ENCODE measurements at regions of chr7 and their contacts with region 1.

Region 1: DNA sequence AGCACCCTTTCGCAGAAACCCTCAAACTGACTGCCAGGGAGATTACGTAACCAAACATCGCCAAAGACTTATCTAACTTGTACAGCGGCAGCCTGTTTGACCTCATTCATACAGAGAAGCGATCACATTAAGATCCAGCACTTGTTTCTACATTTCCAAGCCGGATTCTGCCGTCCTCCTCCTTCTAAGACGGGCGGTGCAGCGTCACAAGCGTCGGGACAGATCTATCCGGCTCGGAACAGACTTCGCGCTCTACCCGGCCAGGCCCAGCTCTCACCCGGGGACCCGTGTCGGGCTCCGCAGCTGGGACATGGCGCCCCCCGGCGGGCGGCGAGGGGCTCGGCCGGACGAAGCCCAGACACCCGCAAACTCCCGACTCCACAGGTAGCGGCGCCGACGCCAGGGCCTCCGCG is 373 bp downstream of the H2AZ2 start:
- DNase-seq: peak; percentile 90 to 96 (median 94)
- H3K4me3 ChIP-seq: peak overlapping the region; percentile 72 to 98 (median 87)
- H3K27ac ChIP-seq: peak overlapping the region; percentile 93 to 97
- H3K4me1 ChIP-seq: peaks cover 7 to 40% (median 25%) of the 10 kb centered on the region in 4 experiments
- H3K27me3 ChIP-seq: no peaks in the 10 kb centered on the region

Region 2: GRCh38 chr7:44415047-44415446 is 432.5 kb before region 1 on chr7:
- CTCF ChIA-PET with region 1: no interaction called
- POLR2A ChIA-PET with region 1: no interaction called
- DNase-seq: no peak
- H3K4me3 ChIP-seq: no peak overlapping the region
- H3K27ac ChIP-seq: no peak overlapping the region
- H3K4me1 ChIP-seq: no peaks in the 10 kb centered on the region
- H3K27me3 ChIP-seq: no peaks in the 10 kb centered on the region

Region 3: DNA sequence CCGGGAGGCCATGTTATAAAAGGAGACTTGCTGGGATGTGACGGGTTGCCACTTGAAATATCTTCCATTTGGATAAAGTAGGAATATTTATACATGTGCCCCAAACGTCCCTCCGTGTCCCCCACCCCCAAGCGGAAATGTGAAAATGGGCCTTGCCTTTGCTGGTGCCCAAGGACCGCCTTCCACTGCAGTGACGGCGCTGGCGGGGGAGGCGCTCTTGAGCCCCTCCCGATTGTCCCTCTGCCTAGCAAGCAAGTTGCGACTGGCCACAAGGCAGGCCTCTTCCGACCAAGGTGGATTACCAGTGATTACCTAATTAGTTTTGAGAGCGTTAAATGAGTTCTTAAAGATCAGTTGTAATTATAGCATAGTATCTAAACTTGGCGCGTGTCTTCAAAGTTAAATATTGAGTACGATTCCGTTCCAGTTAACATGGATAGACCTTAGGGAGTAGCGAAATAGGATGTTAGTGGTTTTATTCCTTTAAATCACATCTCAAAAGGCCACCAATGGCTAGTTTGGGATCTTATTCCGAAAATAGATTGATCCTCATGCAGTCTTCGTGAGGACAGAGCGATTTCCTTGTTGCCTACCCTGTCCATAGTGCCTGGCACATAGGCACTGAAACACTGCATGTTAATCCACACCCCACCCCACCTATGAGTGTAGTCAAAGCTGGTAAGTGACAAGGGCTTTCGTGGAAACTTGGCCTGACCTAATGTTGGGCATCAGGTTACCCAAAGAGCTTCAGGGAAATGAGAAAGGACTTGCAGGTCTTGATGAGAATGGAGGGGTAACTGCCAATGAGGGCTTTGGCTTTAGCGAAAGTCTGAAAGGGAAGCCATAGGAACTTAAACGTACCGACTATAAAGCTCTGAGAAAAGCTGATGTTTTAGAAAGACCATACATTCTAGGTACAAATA is 49.9 kb before region 1 on chr7:
- CTCF ChIA-PET with region 1: interaction called, 6 read pairs
- POLR2A ChIA-PET with region 1: interaction called, 16 read pairs
- DNase-seq: peak; percentile 90 to 94 (median 92)
- H3K4me3 ChIP-seq: peak overlapping the region; percentile 84 to 98 (median 94)
- H3K27ac ChIP-seq: peak overlapping the region; percentile 97 to 99
- H3K4me1 ChIP-seq: peaks cover 10 to 25% (median 22%) of the 10 kb centered on the region in 4 experiments
- H3K27me3 ChIP-seq: no peaks in the 10 kb centered on the region

Region 4: DNA sequence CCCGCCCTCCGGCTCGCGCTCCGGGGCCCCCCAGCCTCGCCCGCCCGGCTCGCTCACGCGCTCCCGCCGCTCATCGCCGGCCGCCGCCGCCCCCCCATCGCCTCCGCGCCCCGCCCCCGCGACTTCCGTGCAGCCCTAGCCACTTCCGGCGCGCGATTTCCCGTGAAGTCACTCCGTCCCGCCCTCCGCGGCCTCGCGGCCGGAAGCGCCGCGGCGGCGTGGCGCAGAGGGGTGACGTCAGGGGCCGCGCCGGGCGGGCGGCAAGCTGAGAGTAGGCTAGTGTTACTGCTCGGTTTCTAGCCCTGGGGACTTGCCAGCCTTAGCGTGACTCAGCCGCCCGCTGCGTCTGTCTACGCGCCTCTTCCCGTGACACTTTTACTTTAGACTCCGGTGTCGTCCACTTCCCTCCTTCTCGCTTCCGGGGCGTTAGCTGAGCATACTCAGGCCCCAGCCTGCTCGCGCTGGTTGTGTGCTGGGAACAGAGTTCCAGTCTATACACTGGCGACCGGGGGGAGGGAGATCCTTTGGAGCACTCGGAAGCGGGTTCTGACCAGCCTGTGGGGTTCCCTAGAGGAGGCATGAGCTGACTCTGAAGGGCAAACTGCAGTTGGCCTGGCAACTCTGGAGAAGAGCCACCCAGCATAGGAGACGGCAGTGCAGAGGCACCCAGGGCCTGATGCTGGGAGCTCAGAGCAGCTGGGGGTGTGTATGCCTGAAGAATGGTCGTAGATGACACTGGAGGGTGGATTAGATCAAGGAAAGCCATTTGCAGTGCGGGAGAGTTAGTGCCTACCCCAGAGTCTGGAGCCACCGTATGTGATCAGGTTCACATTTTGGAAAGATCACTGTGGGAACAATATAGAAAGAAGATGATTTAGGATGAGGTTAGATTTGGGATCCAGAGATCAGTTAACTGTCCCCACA is 38.1 kb after region 1 on chr7 and contains the start of gene PURB:
- CTCF ChIA-PET with region 1: interaction called, 6 read pairs
- POLR2A ChIA-PET with region 1: interaction called, 22 read pairs
- DNase-seq: peak; percentile 97 to 99 (median 99)
- H3K4me3 ChIP-seq: peak within 1 kb of the TSS; percentile 76 to 96 (median 89)
- H3K27ac ChIP-seq: peak within 1 kb of the TSS; percentile 97 to 99
- H3K4me1 ChIP-seq: peaks cover 33 to 55% (median 44%) of the 10 kb centered on the region in 4 experiments
- H3K27me3 ChIP-seq: no peaks in the 10 kb centered on the region

Measured in common myeloid progenitor, CD34-positive (primary cell).